AG04449 (cell line): ENCODE measurements at regions of chr3 and their contacts with region 1.

Region 1: GRCh38 chr3:171829841-171830517 is 13.2 kb upstream of the TMEM212 start:
- DNase-seq: no peak
- H3K4me3 ChIP-seq: no peak overlapping the region
- CTCF ChIP-seq: peak; percentile 81

Region 2: GRCh38 chr3:171640520-171641412 is 189.2 kb before region 1 on chr3:
- CTCF ChIA-PET with region 1: interaction called, 110 read pairs
- POLR2A ChIA-PET with region 1: no interaction called
- DNase-seq: peak; percentile 33
- H3K4me3 ChIP-seq: no peak overlapping the region
- CTCF ChIP-seq: peak; percentile 24

Region 3: DNA sequence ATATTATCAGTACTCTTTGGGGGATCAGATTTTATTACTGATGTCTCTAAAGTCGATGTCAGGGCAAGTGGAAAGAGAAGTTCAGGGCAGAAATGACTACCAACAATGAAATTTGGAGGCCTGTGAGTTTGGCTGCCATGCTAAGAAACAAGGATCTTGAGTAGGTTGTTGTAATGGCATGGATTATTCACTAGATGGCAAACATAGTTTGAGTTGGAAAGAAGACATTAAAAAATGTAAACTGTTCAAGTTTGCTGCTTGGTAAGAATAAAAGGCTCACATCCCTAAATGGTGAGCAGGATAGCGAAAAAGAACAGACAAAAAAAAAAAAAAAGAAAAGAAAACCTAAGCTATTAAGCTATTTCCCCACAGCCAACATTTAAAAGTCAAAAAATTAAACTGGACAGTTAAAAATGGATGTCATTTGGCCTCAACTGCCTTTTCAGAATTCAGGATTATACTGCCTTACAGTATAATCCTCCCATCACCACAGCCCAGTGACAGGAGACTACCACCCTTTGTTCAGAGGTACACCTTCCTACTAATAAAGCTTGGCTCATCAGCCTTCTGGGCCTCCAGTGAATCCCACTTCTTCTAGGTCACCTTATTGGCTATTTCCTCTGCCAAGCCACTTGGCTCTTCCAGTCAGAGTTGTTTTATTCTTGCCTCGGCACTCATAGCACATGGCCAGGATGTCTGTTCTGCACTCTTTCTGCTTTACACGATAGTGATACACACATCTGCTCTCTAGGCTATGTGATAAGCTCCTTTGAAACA is 183.4 kb before region 1 on chr3:
- CTCF ChIA-PET with region 1: interaction called, 110 read pairs
- POLR2A ChIA-PET with region 1: no interaction called
- DNase-seq: peak; percentile 46
- H3K4me3 ChIP-seq: no peak overlapping the region
- CTCF ChIP-seq: peak; percentile 37

Region 4: GRCh38 chr3:171816014-171816461 is 13.9 kb before region 1 on chr3:
- CTCF ChIA-PET with region 1: interaction called, 22 read pairs
- POLR2A ChIA-PET with region 1: no interaction called
- DNase-seq: no peak
- H3K4me3 ChIP-seq: no peak overlapping the region
- CTCF ChIP-seq: no peak

Region 5: DNA sequence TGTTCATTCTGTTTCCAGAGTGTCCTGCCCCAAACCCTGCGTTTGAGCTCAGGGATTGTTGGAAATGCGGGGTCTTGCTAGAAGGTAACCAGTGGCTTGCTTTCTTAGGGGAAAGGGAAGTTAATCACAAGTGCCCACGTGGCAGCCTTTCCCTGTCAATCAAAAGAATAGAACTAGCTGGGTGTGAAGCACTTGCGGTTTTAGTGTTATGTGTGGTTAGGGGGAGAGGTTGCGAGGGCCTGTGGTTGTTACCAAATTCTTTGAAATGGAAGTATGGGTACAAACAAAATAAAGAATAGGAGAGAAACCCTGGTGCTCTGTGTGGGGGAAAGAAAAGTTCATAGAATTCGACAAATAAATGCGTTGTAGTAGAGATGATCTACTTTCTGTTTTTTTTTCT is 277.0 kb after region 1 on chr3:
- CTCF ChIA-PET with region 1: no interaction called
- POLR2A ChIA-PET with region 1: no interaction called
- DNase-seq: no peak
- H3K4me3 ChIP-seq: no peak overlapping the region
- CTCF ChIP-seq: no peak